GM10248 (cell line): ENCODE measurements at regions of chr2 and their contacts with region 1.

Region 1: DNA sequence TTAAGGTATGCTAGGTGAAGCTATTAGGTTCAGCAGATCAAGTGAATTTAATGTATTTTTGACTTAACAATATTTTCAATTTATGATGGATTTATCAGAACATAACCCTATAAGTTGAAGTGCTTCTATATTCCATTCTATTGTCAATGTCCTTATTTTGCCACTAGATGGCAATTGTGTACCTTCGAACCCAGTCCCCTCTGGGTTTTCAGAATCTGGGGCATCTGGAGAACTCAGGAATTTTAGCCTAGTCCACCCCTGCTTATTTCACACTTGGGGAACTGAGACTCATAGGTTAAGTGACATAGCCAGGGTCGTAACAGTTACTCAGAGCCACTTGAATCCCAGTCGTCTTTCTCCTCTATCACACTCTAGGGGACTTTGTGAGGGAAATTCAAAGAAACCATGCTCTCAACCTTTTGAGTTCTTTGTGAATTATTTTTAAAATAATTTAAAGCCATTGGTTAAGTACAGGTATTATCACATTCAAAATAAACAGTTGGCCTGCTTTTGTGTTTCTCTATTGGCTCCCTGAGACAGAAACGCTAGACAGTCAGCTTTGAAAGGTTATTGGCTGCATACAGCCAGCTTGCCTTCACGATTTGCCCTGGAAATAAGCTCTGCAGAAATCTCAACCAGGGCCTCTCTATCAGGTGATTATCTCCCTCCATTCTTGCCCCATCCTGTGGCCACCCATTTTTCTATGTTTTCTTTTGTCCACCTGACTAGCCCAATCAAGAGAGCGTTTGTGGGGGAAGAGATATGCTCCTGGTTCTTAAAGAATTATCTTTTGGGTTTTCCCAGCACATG is 145.0 kb downstream of the TTC27 start:
- DNase-seq: peak; percentile 33
- CTCF ChIP-seq: peak; percentile 42

Region 2: GRCh38 chr2:32743480-32744236 is 29.2 kb before region 1 on chr2:
- CTCF ChIA-PET with region 1: no interaction called
- POLR2A ChIA-PET with region 1: no interaction called
- DNase-seq: peak; percentile 27
- CTCF ChIP-seq: no peak

Region 3: GRCh38 chr2:32760628-32761027 is 12.2 kb before region 1 on chr2:
- CTCF ChIA-PET with region 1: interaction called, 17 read pairs
- POLR2A ChIA-PET with region 1: no interaction called
- DNase-seq: no peak
- CTCF ChIP-seq: no peak